BJ (cell line): ENCODE measurements at regions of chr11 and their contacts with region 1.

Region 1: DNA sequence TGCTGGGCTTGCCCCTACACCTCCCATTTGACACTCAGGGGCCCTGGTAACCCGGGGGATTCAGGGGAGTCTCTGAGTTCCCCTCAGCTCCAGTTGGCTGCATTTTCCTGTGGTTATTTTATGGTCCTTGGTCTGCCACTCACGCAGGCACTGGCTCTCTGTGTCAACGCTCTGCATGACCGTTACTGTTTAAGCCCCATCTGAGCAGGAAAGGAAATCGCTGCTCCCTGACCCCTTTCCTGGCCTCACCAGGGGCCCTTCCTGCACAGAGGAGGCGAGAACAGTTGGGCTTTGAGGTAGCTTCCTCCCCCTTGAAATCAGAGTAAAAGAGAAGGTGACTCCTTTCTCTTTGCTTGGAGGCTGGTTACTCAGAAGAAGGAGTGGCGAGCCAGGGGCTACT is 2.4 kb downstream of the C1QTNF4 start:
- DNase-seq: no peak
- H3K4me3 ChIP-seq: no peak overlapping the region
- H3K27me3 ChIP-seq: peaks cover 45% of the 10 kb centered on the region
- CTCF ChIP-seq: no peak

Region 2: DNA sequence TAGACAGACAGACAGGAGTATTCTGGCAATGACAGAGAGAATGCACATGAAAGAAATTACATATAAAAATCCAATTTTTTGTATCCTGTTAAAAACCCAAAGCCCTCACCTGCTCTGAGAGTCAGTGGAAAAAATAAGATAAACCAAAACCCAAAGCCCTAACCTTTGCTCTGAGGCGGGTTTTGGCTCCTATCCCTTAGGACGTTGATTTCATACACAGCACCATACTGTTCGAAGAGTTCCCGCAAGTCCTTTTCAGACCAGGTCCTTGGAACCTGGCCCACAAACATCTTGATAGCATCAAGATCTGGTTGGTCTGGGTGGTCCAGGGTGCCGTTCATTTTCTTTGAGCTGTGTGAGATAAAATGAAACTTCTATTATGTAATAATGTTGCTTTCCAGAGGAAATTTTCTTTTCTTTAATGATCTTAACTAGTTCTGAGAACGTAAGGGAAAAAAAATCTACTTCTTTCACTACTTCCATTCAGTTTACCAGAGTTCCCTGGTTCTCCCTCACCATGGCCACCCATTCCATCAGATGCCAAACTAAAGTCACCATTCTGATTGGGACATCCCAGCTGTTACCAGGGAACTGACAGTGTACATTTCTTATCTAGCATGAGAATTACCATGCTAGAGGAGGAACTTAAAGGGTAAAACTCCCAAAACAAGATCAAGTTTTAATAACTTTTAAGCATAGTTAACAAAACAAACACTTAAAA is 102.9 kb before region 1 on chr11:
- CTCF ChIA-PET with region 1: no interaction called
- POLR2A ChIA-PET with region 1: interaction called, 11 read pairs
- DNase-seq: no peak
- H3K4me3 ChIP-seq: no peak overlapping the region
- H3K27me3 ChIP-seq: no peaks in the 10 kb centered on the region
- CTCF ChIP-seq: no peak

Region 3: GRCh38 chr11:47863189-47863892 is 271.6 kb after region 1 on chr11:
- CTCF ChIA-PET with region 1: no interaction called
- POLR2A ChIA-PET with region 1: no interaction called
- DNase-seq: peak; percentile 92
- H3K4me3 ChIP-seq: no peak overlapping the region
- H3K27me3 ChIP-seq: no peaks in the 10 kb centered on the region
- CTCF ChIP-seq: no peak